Activated T-helper 1 cell treated with anti-CD3 and anti-CD28 coated beads, Interleukin-12 subunit alpha, Interleukin-12 subunit beta, Interleukin-2, Interleukin-4 antibody, amounts not matched to agents 30 ng/mL and 10 ng/mL and 1 ng/mL, durations not matched to agents 14 hours and 24 hours and 36 hours (primary cell): ENCODE measurements at regions of chr6 and their contacts with region 1.

Region 1: DNA sequence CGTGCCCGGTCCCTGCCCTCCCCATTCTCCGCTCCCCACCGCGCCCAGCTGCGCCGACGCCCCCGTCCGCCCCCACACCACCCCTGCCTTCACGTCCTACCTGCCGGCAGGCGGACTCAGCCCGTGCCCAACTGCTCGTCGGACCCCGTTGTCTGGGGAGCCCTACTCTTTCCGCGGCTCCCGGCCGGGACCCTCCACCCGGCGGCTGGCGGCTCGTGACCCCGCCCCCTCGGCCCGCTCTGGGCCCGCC is at the start of gene SERAC1:
- DNase-seq: no peak
- H3K4me3 Mint-ChIP-seq: peak within 1 kb of the TSS; percentile 83
- H3K27ac Mint-ChIP-seq: peak within 1 kb of the TSS; percentile 97
- H3K4me1 Mint-ChIP-seq: peaks cover 30% of the 10 kb centered on the region
- H3K27me3 Mint-ChIP-seq: no peaks in the 10 kb centered on the region
- total RNA-seq, gene SERAC1: 8.0 and 8.3 TPM in 2 replicates

Region 2: GRCh38 chr6:157726892-157727628 is 440.9 kb before region 1 on chr6:
- intact Hi-C with region 1: no loop called
- DNase-seq: no peak
- H3K4me3 Mint-ChIP-seq: no peak overlapping the region
- H3K27ac Mint-ChIP-seq: no peak overlapping the region
- H3K4me1 Mint-ChIP-seq: no peaks in the 10 kb centered on the region
- H3K27me3 Mint-ChIP-seq: peaks cover 22% of the 10 kb centered on the region

Region 3: GRCh38 chr6:158185729-158186456 is 17.9 kb after region 1 on chr6:
- intact Hi-C with region 1: loop called (anchors 2 kb)
- DNase-seq: no peak
- H3K4me3 Mint-ChIP-seq: no peak overlapping the region
- H3K27ac Mint-ChIP-seq: peak overlapping the region; percentile 36
- H3K4me1 Mint-ChIP-seq: peaks cover 30% of the 10 kb centered on the region
- H3K27me3 Mint-ChIP-seq: no peaks in the 10 kb centered on the region

Region 4: DNA sequence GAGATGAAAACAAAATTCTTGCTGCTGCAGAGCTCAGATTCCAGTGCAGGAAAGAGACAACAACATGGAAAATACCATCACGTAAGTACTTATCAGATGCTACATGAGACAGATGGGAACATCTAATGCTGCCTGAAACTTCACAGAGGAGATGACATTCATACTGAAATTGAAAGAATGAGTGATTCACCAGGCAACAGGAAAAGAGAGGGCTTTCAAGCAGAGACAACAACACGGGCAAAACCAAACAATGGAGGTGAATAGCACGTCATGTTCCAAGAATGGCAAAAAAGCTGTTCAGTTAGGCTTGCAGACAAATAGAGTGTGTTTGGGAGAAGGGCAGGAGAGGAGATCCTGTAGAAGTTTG is 39.4 kb after region 1 on chr6:
- intact Hi-C with region 1: loop called (anchors 1 kb)
- DNase-seq: peak; percentile 68
- H3K4me3 Mint-ChIP-seq: peak overlapping the region; percentile 56
- H3K27ac Mint-ChIP-seq: peak overlapping the region; percentile 96
- H3K4me1 Mint-ChIP-seq: peaks cover 63% of the 10 kb centered on the region
- H3K27me3 Mint-ChIP-seq: no peaks in the 10 kb centered on the region

Region 5: DNA sequence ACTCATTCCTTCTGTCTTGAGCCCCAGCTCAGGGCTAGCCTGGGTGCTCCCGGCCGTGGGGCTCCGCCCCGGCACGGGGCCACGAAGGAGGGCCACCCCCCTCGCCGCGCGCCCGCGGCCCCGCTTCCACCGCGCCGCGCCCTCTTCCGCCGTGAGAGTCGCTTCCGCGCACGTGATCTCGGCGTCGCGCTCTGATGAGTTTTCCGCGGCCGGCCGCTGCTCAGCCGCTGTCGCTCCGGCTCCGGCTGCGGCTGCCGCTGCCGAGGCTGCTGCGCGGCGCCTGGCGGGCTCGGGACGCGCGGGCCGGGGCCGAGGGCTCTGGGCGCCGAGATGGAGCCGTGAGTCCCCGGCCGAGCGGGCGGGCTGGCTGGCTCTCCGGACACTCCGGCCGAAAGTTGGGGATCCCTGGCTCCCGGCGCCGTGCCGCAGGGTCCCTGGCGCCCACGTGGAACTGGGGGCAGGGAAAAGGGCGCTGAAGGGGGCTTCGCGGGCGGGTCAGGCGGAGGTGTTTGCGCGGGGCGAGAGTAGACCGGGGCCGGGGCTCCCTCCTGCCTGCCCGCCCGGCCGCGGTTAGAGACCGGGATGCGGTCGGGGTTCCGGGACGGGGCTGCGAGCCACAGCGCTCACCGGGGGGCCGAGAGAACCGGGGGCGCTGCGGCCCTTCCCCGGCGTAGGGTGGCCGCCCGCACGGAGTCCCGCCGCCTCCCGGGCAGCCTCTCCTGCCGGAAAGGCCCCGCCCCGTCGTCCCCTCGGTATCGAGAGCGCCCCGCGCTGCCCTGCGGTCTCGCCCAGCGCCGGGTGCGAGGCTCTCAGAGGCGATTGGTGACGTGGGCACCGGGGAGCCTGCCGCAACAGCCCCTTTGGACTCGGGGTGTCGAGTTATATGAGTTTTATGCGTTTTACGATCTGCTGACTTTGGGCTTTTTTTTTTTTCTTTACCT is 392.2 kb after region 1 on chr6 and contains the start of gene TMEM181:
- intact Hi-C with region 1: loop called (anchors 1 kb)
- DNase-seq: peak; percentile 84
- H3K4me3 Mint-ChIP-seq: peak within 1 kb of the TSS; percentile 97
- H3K27ac Mint-ChIP-seq: peak within 1 kb of the TSS; percentile 95
- H3K4me1 Mint-ChIP-seq: peaks cover 32% of the 10 kb centered on the region
- H3K27me3 Mint-ChIP-seq: peaks cover 3% of the 10 kb centered on the region
- total RNA-seq, gene TMEM181: 17.0 and 17.7 TPM in 2 replicates